ENCODE measurements at regions of chrX and their contacts with region 1.

Region 1: DNA sequence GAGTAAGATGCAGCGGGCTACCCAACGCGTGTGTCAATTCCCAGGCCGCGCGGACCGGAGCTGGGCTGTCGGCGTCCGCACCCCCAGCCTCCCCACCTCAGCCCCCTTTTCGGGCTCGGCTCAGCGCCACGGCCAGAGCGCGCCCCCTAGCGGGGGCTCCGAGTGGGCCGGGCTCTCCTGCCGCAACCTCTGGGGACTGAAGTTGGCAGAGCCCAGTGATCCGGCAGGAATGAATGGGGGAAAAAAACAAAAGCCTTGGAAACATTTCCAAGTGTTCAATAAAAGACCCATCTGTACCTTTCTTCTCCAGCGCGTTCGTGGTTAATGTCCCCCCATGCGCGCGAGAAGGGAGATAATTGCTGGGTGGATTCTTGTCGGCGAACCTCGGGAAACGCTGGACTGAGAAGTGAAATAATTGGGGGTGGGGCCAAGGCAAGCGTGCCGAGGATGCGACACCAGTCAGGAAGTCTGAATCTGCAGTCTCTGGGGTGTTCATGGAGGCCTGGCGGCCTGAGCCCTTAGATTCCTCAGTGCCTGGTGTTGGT is 5.2 kb upstream of the ARX start:
- DNase-seq: peak in 1 of 2 experiments; percentile 80
- ATAC-seq: peak; percentile 85 to 91
- H3K4me3 ChIP-seq: peak overlapping the region; percentile 52
- H3K27ac ChIP-seq: peak overlapping the region; percentile 39 to 77; a peak in 5 of 6 replicates
- H3K4me1 ChIP-seq: peaks cover 14% of the 10 kb centered on the region
- CTCF ChIP-seq: peak; percentile 84
- EP300 ChIP-seq: no peak
- POLR2A ChIP-seq: no peak
- RAD21 ChIP-seq: peak; percentile 47 to 79

Region 2: GRCh38 chrX:24838629-24839028 is 182.3 kb before region 1 on chrX:
- CTCF ChIA-PET with region 1: interaction called, 42 read pairs
- POLR2A ChIA-PET with region 1: interaction called, 6 read pairs
- DNase-seq: peak in 1 of 2 experiments; percentile 31
- ATAC-seq: peak in 1 of 2 experiments; percentile 60; a peak in 2 of 6 replicates
- H3K4me3 ChIP-seq: no peak overlapping the region
- H3K27ac ChIP-seq: peak overlapping the region in 1 of 2 experiments; percentile 54; a peak in 2 of 6 replicates
- H3K4me1 ChIP-seq: peaks cover 16% of the 10 kb centered on the region; the same call in 2 of the 3 replicates
- CTCF ChIP-seq: peak; percentile 73
- EP300 ChIP-seq: no peak
- POLR2A ChIP-seq: no peak
- RAD21 ChIP-seq: peak; percentile 56 to 75

Region 3: DNA sequence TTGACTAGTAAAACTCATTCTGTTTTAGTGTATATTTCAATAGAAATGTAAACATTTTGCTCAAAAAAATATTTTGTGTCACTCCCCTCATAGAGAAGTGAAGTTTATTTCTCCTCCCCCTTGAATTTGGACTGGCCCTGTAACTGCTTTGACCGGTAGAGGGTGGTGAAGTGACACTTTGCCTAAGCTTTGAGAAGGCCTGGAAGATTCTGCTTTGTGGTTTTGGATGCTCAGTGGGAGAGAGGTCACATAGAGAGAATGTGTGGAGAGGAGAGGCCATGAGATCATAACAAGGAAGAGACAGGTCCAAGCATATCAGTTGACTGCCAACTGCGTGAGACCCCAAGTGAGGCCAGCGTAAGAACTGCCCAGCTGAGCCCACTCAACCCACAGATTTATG is 13.9 kb after region 1 on chrX:
- CTCF ChIA-PET with region 1: interaction called, 17 read pairs
- POLR2A ChIA-PET with region 1: no interaction called
- DNase-seq: no peak
- ATAC-seq: no peak
- H3K4me3 ChIP-seq: no peak overlapping the region
- H3K27ac ChIP-seq: no peak overlapping the region
- H3K4me1 ChIP-seq: no peaks in the 10 kb centered on the region
- CTCF ChIP-seq: no peak
- EP300 ChIP-seq: no peak
- POLR2A ChIP-seq: no peak
- RAD21 ChIP-seq: no peak